ENCODE measurements at regions of chr1 and their contacts with region 1.

Region 1: GRCh38 chr1:161486806-161487741 is 18.2 kb upstream of the FCGR2A start:
- DNase-seq: peak; percentile 88
- ATAC-seq: peak; percentile 81
- H3K4me3 ChIP-seq: peak overlapping the region; percentile 58
- H3K27ac ChIP-seq: peak overlapping the region; percentile 45
- H3K4me1 ChIP-seq: peaks cover 10% of the 10 kb centered on the region
- H3K27me3 ChIP-seq: peaks cover 14% of the 10 kb centered on the region; the same call in 1 of the 2 replicates
- CTCF ChIP-seq: peak; percentile 97

Region 2: DNA sequence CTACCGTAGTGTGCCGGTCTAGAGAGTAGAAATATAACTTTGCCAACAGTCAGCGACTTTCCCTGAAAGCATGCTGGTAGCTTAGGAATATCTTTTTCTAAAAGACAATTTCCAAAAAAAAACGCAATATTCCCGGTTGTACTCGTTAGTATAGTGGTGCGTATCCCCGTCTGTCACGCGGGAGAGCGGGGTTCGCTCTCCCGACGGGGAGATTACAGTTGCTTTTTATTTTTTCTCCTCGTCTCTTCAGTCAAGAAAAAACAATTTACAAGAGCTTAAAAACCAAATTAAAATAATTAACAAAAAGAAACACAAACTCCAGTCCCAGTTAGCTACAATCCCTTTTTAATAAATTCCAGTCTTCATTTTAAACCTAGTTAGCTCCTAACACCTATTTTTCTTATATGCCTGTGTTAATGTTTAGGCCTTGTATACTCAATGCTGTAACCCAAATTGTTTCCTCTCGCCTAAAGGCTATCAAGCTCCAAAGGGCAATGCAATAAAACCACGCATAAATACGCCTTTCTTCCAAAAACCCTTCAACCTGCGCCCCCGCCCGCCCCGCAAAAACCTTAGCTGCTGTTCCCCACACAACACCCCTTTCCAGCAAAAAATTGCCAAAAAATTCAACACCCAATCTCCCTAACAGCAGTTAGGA is 45.0 kb after region 1 on chr1:
- CTCF ChIA-PET with region 1: no interaction called
- POLR2A ChIA-PET with region 1: interaction called, 6 read pairs
- intact Hi-C with region 1: loop called (anchors 2 kb)
- DNase-seq: no peak
- ATAC-seq: no peak
- H3K4me3 ChIP-seq: peak overlapping the region; percentile 69
- H3K27ac ChIP-seq: no peak overlapping the region
- H3K4me1 ChIP-seq: peaks cover 12% of the 10 kb centered on the region
- H3K27me3 ChIP-seq: no peaks in the 10 kb centered on the region
- CTCF ChIP-seq: no peak

Region 3: GRCh38 chr1:161738627-161739287 is 251.7 kb after region 1 on chr1:
- CTCF ChIA-PET with region 1: interaction called, 6 read pairs
- POLR2A ChIA-PET with region 1: no interaction called
- intact Hi-C with region 1: loop called (anchors 1 kb)
- DNase-seq: peak; percentile 91
- ATAC-seq: peak; percentile 58
- H3K4me3 ChIP-seq: no peak overlapping the region
- H3K27ac ChIP-seq: no peak overlapping the region
- H3K4me1 ChIP-seq: peaks cover 47% of the 10 kb centered on the region
- H3K27me3 ChIP-seq: no peaks in the 10 kb centered on the region
- CTCF ChIP-seq: peak; percentile 92

Region 4: DNA sequence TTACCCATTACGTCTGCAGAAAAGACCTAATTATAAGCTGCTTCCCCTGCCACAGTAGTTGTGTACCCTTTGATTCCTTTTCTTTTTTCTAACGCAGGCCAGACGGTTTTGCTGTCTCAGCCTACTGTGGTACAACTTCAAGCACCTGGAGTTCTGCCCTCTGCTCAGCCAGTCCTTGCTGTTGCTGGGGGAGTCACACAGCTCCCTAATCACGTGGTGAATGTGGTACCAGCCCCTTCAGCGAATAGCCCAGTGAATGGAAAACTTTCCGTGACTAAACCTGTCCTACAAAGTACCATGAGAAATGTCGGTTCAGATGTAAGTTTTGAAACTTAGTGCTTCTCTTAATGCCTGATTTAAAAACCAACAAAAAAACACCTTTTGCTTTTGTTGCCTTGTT is 314.9 kb after region 1 on chr1:
- CTCF ChIA-PET with region 1: no interaction called
- POLR2A ChIA-PET with region 1: no interaction called
- intact Hi-C with region 1: no loop called
- DNase-seq: no peak
- ATAC-seq: no peak
- H3K4me3 ChIP-seq: no peak overlapping the region
- H3K27ac ChIP-seq: no peak overlapping the region
- H3K4me1 ChIP-seq: no peaks in the 10 kb centered on the region
- H3K27me3 ChIP-seq: no peaks in the 10 kb centered on the region
- CTCF ChIP-seq: no peak